ENCODE measurements at regions of chr16 and their contacts with region 1.

Region 1: GRCh38 chr16:25111403-25112166 is at the start of gene LCMT1:
- DNase-seq: peak; percentile 94
- H3K4me3 Mint-ChIP-seq: peak within 1 kb of the TSS; percentile 93
- H3K27ac Mint-ChIP-seq: peak within 1 kb of the TSS; percentile 97
- H3K4me1 Mint-ChIP-seq: peaks cover 60% of the 10 kb centered on the region
- H3K27me3 Mint-ChIP-seq: no peaks in the 10 kb centered on the region
- total RNA-seq, gene LCMT1: 39.0 to 50.7 TPM

Region 2: GRCh38 chr16:25014500-25015147 is 97.0 kb before region 1 on chr16:
- CTCF ChIA-PET with region 1: interaction called, 3 read pairs
- POLR2A ChIA-PET with region 1: interaction called, 27 read pairs
- DNase-seq: peak; percentile 24
- H3K4me3 Mint-ChIP-seq: peak overlapping the region; percentile 96
- H3K27ac Mint-ChIP-seq: peak overlapping the region; percentile 90
- H3K4me1 Mint-ChIP-seq: peaks cover 72% of the 10 kb centered on the region
- H3K27me3 Mint-ChIP-seq: no peaks in the 10 kb centered on the region

Region 3: DNA sequence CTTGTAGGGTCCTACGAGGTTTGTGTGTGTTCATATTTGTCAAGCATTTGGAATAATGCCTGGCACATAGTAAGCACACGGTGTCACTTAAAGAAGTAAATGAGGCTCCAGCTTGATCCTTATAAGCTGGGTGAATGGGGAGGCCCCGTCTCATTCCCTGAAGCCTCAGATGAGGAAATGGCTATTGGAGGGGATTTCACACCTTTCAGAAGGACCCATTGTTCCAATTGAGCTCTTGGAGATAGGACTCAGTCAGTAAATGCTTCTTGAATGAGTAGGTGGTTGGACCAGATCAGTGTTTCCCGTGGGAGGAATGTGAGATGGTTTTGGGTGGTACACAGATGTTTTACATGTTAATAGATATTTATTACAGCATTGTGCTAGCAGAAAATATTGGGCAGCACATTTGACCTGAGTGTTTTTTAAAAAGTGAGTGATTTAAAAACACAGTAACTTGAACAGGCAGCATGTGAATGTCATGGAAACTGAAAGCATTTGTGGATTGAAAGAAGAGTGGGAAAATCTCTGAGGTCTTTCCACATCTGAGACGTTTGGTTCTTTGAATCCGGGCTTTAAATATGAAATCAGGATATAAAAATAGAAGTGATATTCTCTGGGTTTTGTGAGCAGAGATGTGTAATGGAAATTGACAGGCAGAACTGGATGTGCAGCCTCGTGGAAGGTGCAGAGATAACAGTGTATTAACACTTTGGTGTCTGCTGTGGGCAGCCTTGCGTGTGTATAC is 60.0 kb before region 1 on chr16:
- CTCF ChIA-PET with region 1: interaction called, 20 read pairs
- POLR2A ChIA-PET with region 1: interaction called, 112 read pairs
- DNase-seq: no peak
- H3K4me3 Mint-ChIP-seq: peak overlapping the region; percentile 51
- H3K27ac Mint-ChIP-seq: peak overlapping the region; percentile 52
- H3K4me1 Mint-ChIP-seq: peaks cover 53% of the 10 kb centered on the region
- H3K27me3 Mint-ChIP-seq: no peaks in the 10 kb centered on the region

Region 4: GRCh38 chr16:25066747-25067631 is 44.6 kb before region 1 on chr16:
- CTCF ChIA-PET with region 1: interaction called, 6 read pairs
- POLR2A ChIA-PET with region 1: interaction called, 112 read pairs
- DNase-seq: peak; percentile 89
- H3K4me3 Mint-ChIP-seq: peak overlapping the region; percentile 87
- H3K27ac Mint-ChIP-seq: peak overlapping the region; percentile 78
- H3K4me1 Mint-ChIP-seq: peaks cover 41% of the 10 kb centered on the region
- H3K27me3 Mint-ChIP-seq: peaks cover 8% of the 10 kb centered on the region

Region 5: GRCh38 chr16:25100511-25100910 is 11.1 kb before region 1 on chr16:
- CTCF ChIA-PET with region 1: no interaction called
- POLR2A ChIA-PET with region 1: no interaction called
- DNase-seq: no peak
- H3K4me3 Mint-ChIP-seq: no peak overlapping the region
- H3K27ac Mint-ChIP-seq: no peak overlapping the region
- H3K4me1 Mint-ChIP-seq: no peaks in the 10 kb centered on the region
- H3K27me3 Mint-ChIP-seq: no peaks in the 10 kb centered on the region

Region 6: GRCh38 chr16:25135254-25135878 is 23.8 kb after region 1 on chr16:
- CTCF ChIA-PET with region 1: no interaction called
- POLR2A ChIA-PET with region 1: no interaction called
- DNase-seq: no peak
- H3K4me3 Mint-ChIP-seq: no peak overlapping the region
- H3K27ac Mint-ChIP-seq: no peak overlapping the region
- H3K4me1 Mint-ChIP-seq: no peaks in the 10 kb centered on the region
- H3K27me3 Mint-ChIP-seq: no peaks in the 10 kb centered on the region

Region 7: DNA sequence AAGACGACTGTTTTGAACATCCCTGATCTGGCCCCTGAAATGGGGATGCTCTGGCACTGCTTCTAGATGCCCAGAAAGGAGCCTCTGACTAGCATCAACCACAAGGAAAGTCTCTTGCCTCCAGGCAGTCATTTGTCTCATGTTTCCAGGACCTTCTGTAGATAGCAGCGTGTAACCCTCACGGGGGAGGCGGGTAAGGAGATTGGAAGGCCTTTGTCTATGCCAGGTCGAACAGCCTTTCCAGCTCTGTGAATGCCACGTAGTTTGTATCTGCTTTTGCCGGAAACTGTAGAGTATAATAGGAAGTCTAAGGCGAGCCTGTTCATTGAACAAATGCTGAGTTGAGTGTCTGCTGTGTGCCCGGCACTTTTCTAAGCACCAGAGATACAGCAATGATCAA is 61.2 kb after region 1 on chr16:
- CTCF ChIA-PET with region 1: no interaction called
- POLR2A ChIA-PET with region 1: no interaction called
- DNase-seq: no peak
- H3K4me3 Mint-ChIP-seq: no peak overlapping the region
- H3K27ac Mint-ChIP-seq: no peak overlapping the region
- H3K4me1 Mint-ChIP-seq: no peaks in the 10 kb centered on the region
- H3K27me3 Mint-ChIP-seq: no peaks in the 10 kb centered on the region

Region 8: DNA sequence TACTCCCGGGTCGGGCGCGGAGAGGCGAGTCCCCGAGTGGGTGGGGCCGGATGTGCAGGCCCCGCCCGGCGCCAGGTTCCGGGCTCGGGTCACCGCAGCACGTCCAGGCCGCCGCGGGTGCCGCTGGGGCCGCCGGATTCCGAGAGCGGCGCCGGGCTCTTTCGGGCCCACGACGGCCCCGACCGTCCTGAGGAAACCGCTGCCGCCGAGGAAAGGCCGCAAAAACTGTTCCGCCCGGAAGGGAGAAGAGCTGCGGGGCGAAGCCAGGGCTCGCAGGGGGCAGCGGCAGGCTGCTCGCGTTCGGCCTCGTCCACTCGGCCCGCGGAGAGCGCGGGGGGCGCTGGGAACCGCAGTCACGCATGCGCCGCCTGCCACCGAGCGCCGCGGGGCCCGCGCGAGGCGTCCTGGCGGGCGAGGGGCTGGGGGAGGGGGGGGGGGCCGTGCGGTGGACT is 145.9 kb after region 1 on chr16 and contains the start of gene ZKSCAN2:
- CTCF ChIA-PET with region 1: no interaction called
- POLR2A ChIA-PET with region 1: interaction called, 16 read pairs
- DNase-seq: peak; percentile 90
- H3K4me3 Mint-ChIP-seq: peak within 1 kb of the TSS; percentile 90
- H3K27ac Mint-ChIP-seq: peak within 1 kb of the TSS; percentile 93
- H3K4me1 Mint-ChIP-seq: peaks cover 65% of the 10 kb centered on the region
- H3K27me3 Mint-ChIP-seq: no peaks in the 10 kb centered on the region
- total RNA-seq, gene ZKSCAN2: 4.1 to 4.3 TPM

Measured in activated CD4-positive, alpha-beta memory T cell treated with anti-CD3 and anti-CD28 coated beads, Interleukin-2, amount 10 ng/mL, durations not matched to agents 7 days and 5 days (primary cell).